Dendritic cell treated with granulocyte-macrophage colony-stimulating factor and Interleukin-4, amounts not matched to agents 40 ng/mL and 50 ng/mL, for 4 days (primary cell): ENCODE measurements at regions of chr2 and their contacts with region 1.

Region 1: DNA sequence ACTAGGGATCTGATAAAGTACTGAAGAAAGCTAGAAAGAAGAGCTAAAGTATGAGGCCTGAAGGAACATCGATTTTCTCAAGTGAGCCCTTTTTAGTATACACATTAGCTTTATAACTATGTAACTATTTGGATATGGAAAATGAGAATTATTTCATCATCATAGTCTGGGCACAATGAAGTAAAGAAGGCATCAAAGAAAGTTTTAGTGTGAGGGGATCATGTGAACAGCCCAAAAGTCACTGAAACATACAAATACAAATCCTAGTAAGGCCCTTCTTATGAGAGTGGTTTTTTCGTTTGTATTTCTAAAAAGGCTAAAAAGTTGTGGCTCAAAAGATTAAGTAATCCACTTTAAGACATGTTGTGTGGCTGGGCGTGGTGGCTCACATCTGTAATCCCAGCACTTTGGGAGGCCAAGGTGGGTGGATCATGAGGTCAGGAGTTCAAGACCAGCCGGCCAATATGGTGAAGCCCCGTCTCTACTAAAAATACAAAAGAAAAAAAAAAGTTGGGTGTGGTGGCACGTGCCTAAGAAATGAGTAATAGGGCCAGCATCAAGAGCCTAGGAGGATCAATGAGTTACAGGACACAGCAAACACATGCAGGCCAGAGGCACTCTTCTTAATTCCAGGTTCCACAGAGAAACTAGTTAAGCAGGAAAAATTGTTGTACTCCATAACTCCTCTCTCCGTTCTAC is 61.9 kb downstream of the PUM2 start:
- H3K4me3 Mint-ChIP-seq: no peak overlapping the region
- H3K27ac Mint-ChIP-seq: no peak overlapping the region
- H3K4me1 Mint-ChIP-seq: peaks cover 12% of the 10 kb centered on the region
- H3K27me3 Mint-ChIP-seq: no peaks in the 10 kb centered on the region

Region 2: GRCh38 chr2:20254731-20255130 is 34.1 kb before region 1 on chr2:
- intact Hi-C with region 1: loop called (anchors 5 kb)
- H3K4me3 Mint-ChIP-seq: no peak overlapping the region
- H3K27ac Mint-ChIP-seq: no peak overlapping the region
- H3K4me1 Mint-ChIP-seq: no peaks in the 10 kb centered on the region
- H3K27me3 Mint-ChIP-seq: no peaks in the 10 kb centered on the region